Endothelial cell of umbilical vein (primary cell): ENCODE measurements at regions of chr17 and their contacts with region 1.

Region 1: DNA sequence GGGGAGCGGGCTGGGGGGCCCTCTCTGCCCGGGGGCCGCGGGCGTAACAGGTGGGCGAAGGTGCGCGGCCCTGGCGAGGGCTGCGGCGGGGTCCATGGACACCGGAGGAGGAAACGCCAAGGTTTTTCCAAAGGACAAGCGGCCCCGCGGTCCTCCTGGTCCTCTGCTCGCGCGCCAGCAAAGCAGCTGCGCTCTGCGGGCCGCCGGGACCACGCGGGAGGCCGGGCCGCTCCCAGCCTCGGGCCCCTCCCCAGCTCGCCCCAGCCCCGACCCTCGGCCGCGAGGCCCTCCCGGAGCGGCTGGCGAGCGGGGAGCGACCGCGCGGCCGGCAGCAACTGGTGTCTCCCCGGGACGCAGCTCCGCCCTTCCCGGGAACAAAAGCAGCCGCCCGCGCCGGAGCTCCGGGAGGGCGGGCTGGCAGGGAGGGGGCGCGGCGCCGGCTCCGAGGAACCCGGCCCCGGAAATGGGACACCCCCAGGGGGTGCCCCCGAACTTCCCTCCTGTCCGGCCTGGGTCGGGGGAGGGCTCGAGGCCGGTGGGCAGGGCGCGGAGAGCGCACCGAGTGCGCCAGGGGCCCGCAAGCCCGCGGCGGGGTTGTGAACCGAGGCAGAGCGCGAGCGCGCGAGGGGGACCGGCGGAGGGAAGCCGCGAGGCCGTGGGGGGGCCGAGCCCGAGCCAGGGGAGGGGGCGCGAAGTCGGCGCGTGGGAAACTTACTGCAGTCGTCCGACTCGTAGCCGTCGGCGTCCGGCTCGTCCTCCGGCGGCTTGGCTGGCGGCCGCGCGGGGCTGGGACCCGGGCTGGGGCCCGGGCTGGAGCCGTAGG is 847 bp downstream of the DOC2B start:
- DNase-seq: no peak
- H3K4me3 ChIP-seq: peak overlapping the region in 1 of 3 experiments; percentile 3
- H3K27ac ChIP-seq: no peak overlapping the region
- H3K4me1 ChIP-seq: no peaks in the 10 kb centered on the region
- H3K27me3 ChIP-seq: peaks cover 44 to 47% of the 10 kb centered on the region in 2 experiments
- CTCF ChIP-seq: no peak
- POLR2A ChIP-seq: no peak

Region 2: GRCh38 chr17:164303-165235 is 16.0 kb before region 1 on chr17:
- CTCF ChIA-PET with region 1: interaction called, 10 read pairs
- POLR2A ChIA-PET with region 1: no interaction called
- dilution Hi-C with region 1: no loop called
- intact Hi-C with region 1: no loop called
- DNase-seq: peak; percentile 69
- H3K4me3 ChIP-seq: no peak overlapping the region
- H3K27ac ChIP-seq: no peak overlapping the region
- H3K4me1 ChIP-seq: no peaks in the 10 kb centered on the region
- H3K27me3 ChIP-seq: no peaks in the 10 kb centered on the region
- CTCF ChIP-seq: peak; percentile 65 to 83
- POLR2A ChIP-seq: no peak

Region 3: DNA sequence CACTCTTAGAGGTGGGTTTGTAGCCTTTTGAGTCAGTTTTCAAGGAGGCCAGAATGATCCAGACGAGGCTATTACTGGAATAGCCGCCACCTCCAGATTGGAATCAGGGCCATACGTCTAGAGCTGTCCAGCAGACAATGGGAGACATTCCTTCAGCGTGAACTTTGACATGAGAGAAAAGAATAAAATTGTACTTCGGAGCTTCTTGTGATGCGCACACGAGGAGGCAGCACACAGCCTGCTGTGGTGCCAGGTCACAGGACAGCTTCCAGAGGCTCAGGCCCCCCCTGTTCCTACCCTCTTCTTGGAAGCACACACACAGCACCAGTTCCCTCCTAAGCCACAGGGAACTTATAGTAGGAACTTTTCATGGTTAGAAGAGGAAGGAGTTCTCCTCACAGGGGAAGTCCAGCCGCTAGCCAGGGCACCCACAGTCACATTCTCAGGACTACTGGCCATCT is 453.1 kb after region 1 on chr17:
- CTCF ChIA-PET with region 1: no interaction called
- POLR2A ChIA-PET with region 1: no interaction called
- dilution Hi-C with region 1: no loop called
- intact Hi-C with region 1: no loop called
- DNase-seq: peak; percentile 78
- H3K4me3 ChIP-seq: no peak overlapping the region
- H3K27ac ChIP-seq: peak overlapping the region; percentile 71
- H3K4me1 ChIP-seq: peaks cover 11% of the 10 kb centered on the region
- H3K27me3 ChIP-seq: no peaks in the 10 kb centered on the region
- CTCF ChIP-seq: peak in 1 of 2 donors; percentile 16
- POLR2A ChIP-seq: no peak